OCI-LY7 (cell line): ENCODE measurements at regions of chr1 and their contacts with region 1.

Region 1: DNA sequence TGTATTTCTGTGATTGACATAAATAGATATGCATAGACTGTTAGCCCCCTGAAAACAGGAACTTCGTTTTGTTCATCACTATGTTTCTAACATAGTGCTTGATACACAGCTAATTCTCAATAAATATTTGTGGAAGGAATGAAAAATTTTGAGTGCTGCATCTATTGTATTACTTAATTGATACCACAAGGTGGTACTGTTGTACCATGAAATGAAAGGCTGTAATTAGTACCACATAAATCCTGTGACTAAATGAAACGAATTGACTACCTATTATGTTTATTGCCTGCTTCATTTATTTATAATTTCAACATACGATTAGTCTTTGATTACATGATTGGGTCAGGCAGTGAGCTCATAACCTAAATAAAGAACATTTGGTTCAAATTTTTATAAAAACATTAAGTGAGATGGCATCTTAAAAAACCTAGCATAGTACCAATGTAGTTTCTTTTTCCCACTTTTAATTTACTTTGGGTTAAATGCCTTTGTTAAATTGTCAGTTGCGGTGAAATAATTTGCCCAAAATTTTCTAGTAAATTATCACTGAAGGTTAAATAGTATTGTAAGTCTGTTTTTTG is 15.0 kb upstream of the TGFB2 start:
- DNase-seq: peak; percentile 45
- H3K4me3 ChIP-seq: no peak overlapping the region
- H3K27ac ChIP-seq: no peak overlapping the region
- H3K4me1 ChIP-seq: no peaks in the 10 kb centered on the region
- CTCF ChIP-seq: peak; percentile 86

Region 2: GRCh38 chr1:218518216-218518740 is 188.1 kb after region 1 on chr1:
- CTCF ChIA-PET with region 1: no interaction called
- POLR2A ChIA-PET with region 1: no interaction called
- intact Hi-C with region 1: loop called (anchors 2 kb)
- DNase-seq: no peak
- H3K4me3 ChIP-seq: no peak overlapping the region
- H3K27ac ChIP-seq: no peak overlapping the region
- H3K4me1 ChIP-seq: no peaks in the 10 kb centered on the region
- CTCF ChIP-seq: no peak